GM13977 (cell line): ENCODE measurements at regions of chr15 and their contacts with region 1.

Region 1: GRCh38 chr15:34587717-34588674 is 4.5 kb upstream of the GOLGA8B start:
- DNase-seq: peak; percentile 69
- CTCF ChIP-seq: peak; percentile 92

Region 2: GRCh38 chr15:34084086-34084485 is 503.9 kb before region 1 on chr15:
- in situ Hi-C with region 1: loop called (anchors 25 kb)
- DNase-seq: no peak
- CTCF ChIP-seq: no peak

Region 3: GRCh38 chr15:34241372-34242330 is 346.3 kb before region 1 on chr15:
- in situ Hi-C with region 1: loop called (anchors 25 kb)
- DNase-seq: peak; percentile 57
- CTCF ChIP-seq: peak; percentile 61

Region 4: GRCh38 chr15:34367101-34368081 is 220.6 kb before region 1 on chr15 and contains the start of gene LPCAT4:
- in situ Hi-C with region 1: loop called (anchors 25 kb)
- DNase-seq: peak; percentile 98
- CTCF ChIP-seq: peak; percentile 96

Region 5: GRCh38 chr15:34470091-34470490 is 117.9 kb before region 1 on chr15:
- in situ Hi-C with region 1: loop called (anchors 25 kb)
- DNase-seq: no peak
- CTCF ChIP-seq: no peak